ENCODE measurements at regions of chrX and their contacts with region 1.

Region 1: DNA sequence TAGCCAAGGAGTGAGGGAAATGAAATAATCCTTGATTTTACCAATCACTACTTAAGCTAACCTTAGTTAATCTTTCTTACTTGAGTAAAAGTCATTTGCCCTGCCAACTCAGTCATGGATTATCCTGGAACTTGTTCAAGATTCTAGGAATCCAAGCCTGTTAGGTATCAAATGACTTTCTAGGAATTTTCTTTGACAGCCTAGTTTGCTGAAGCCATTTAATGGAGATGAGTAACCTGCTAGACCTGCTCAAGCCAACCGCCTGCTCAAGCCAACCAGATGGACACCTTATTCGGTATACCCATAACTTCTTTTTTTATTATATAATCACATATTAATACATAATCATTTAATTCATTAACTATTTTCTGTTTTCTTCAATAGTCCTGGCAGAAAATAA is 180.4 kb downstream of the KLHL13 start:
- DNase-seq: no peak
- ATAC-seq: no peak
- H3K4me3 ChIP-seq: no peak overlapping the region
- H3K27ac ChIP-seq: no peak overlapping the region
- H3K4me1 ChIP-seq: no peaks in the 10 kb centered on the region
- H3K27me3 ChIP-seq: no peaks in the 10 kb centered on the region
- CTCF ChIP-seq: no peak
- POLR2A ChIP-seq: no peak
- RAD21 ChIP-seq: no peak

Region 2: GRCh38 chrX:117972711-117973109 is 36.5 kb after region 1 on chrX:
- CTCF ChIA-PET with region 1: no interaction called
- POLR2A ChIA-PET with region 1: no interaction called
- dilution Hi-C with region 1: no loop called
- in situ Hi-C with region 1: no loop called
- intact Hi-C with region 1: loop called (anchors 1 kb)
- DNase-seq: peak; percentile 40
- ATAC-seq: peak; percentile 53; the same call in 1 of the 2 replicates
- H3K4me3 ChIP-seq: peak overlapping the region; percentile 7; the same call in 1 of the 2 replicates
- H3K27ac ChIP-seq: no peak overlapping the region
- H3K4me1 ChIP-seq: no peaks in the 10 kb centered on the region
- H3K27me3 ChIP-seq: no peaks in the 10 kb centered on the region
- CTCF ChIP-seq: no peak
- POLR2A ChIP-seq: no peak
- RAD21 ChIP-seq: no peak

Measured in IMR-90 (cell line).